ENCODE measurements at regions of chr12 and their contacts with region 1.

Region 1: GRCh38 chr12:47276621-47277309 is 197.0 kb upstream of the AMIGO2 start:
- DNase-seq: peak; percentile 69
- ATAC-seq: peak; percentile 77
- H3K4me3 Mint-ChIP-seq: peak overlapping the region; percentile 12
- H3K27ac Mint-ChIP-seq: peak overlapping the region; percentile 88
- H3K4me1 Mint-ChIP-seq: peaks cover 87% of the 10 kb centered on the region
- H3K27me3 Mint-ChIP-seq: no peaks in the 10 kb centered on the region

Region 2: GRCh38 chr12:47221256-47222023 is 55.3 kb before region 1 on chr12:
- CTCF ChIA-PET with region 1: interaction called, 5 read pairs
- POLR2A ChIA-PET with region 1: interaction called, 7 read pairs
- intact Hi-C with region 1: loop called (anchors 2 kb)
- DNase-seq: no peak
- ATAC-seq: no peak
- H3K4me3 Mint-ChIP-seq: peak overlapping the region; percentile 72
- H3K27ac Mint-ChIP-seq: peak overlapping the region; percentile 88
- H3K4me1 Mint-ChIP-seq: peaks cover 67% of the 10 kb centered on the region
- H3K27me3 Mint-ChIP-seq: no peaks in the 10 kb centered on the region

Region 3: GRCh38 chr12:47302111-47302671 is 25.4 kb after region 1 on chr12:
- CTCF ChIA-PET with region 1: interaction called, 8 read pairs
- POLR2A ChIA-PET with region 1: interaction called, 9 read pairs
- intact Hi-C with region 1: loop called (anchors 2 kb)
- DNase-seq: peak; percentile 35
- ATAC-seq: peak; percentile 74
- H3K4me3 Mint-ChIP-seq: peak overlapping the region; percentile 26
- H3K27ac Mint-ChIP-seq: peak overlapping the region; percentile 86
- H3K4me1 Mint-ChIP-seq: peaks cover 68% of the 10 kb centered on the region
- H3K27me3 Mint-ChIP-seq: no peaks in the 10 kb centered on the region

Region 4: DNA sequence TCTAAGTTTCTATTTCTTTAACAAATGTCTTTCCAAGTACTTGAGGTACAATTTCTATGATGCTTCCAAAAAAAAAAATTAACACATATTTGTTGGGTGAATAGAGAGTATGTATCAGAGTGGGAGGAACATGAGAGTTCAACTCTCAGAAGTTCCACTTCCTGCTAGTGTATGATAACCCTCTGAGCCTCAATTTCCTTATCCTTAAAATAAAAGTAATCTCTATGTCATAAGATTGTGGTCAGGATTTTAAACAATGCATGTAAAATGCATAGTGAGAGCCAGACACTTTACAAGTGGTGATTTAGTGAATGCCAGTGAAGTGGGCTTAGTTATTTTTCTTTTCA is 73.3 kb after region 1 on chr12:
- CTCF ChIA-PET with region 1: no interaction called
- POLR2A ChIA-PET with region 1: interaction called, 4 read pairs
- intact Hi-C with region 1: loop called (anchors 2 to 5 kb)
- DNase-seq: no peak
- ATAC-seq: peak; percentile 88
- H3K4me3 Mint-ChIP-seq: peak overlapping the region; percentile 53
- H3K27ac Mint-ChIP-seq: peak overlapping the region; percentile 98
- H3K4me1 Mint-ChIP-seq: peaks cover 79% of the 10 kb centered on the region
- H3K27me3 Mint-ChIP-seq: no peaks in the 10 kb centered on the region

Region 5: GRCh38 chr12:47419497-47419896 is 142.7 kb after region 1 on chr12:
- CTCF ChIA-PET with region 1: no interaction called
- POLR2A ChIA-PET with region 1: interaction called, 3 read pairs
- intact Hi-C with region 1: loop called in 1 of 2 experiments (anchors 5 kb)
- DNase-seq: no peak
- ATAC-seq: peak; percentile 93
- H3K4me3 Mint-ChIP-seq: no peak overlapping the region
- H3K27ac Mint-ChIP-seq: peak overlapping the region; percentile 56
- H3K4me1 Mint-ChIP-seq: peaks cover 56% of the 10 kb centered on the region
- H3K27me3 Mint-ChIP-seq: no peaks in the 10 kb centered on the region

Measured in activated CD4-positive, alpha-beta T cell treated with anti-CD3 and anti-CD28 coated beads for 36 hours (primary cell).